HCT116 (cell line): ENCODE measurements at regions of chr20 and their contacts with region 1.

Region 1: GRCh38 chr20:40689943-40690835 is 1.2 kb upstream of the MAFB start:
- DNase-seq: peak; percentile 51
- ATAC-seq: peak; percentile 78
- H3K4me3 ChIP-seq: peak overlapping the region; percentile 50 to 60
- H3K27ac ChIP-seq: peak overlapping the region; percentile 26; the same call in 1 of the 2 replicates
- H3K4me1 ChIP-seq: peaks cover 3 to 17% of the 10 kb centered on the region in 2 experiments; a peak in 3 of 4 replicates
- H3K27me3 ChIP-seq: peaks cover 24% of the 10 kb centered on the region
- CTCF ChIP-seq: peak; percentile 64 to 88 (median 87)
- POLR2A ChIP-seq: no peak
- RAD21 ChIP-seq: peak; percentile 85

Region 2: GRCh38 chr20:39112178-39112743 is 1577.9 kb before region 1 on chr20:
- CTCF ChIA-PET with region 1: interaction called, 3 read pairs
- POLR2A ChIA-PET with region 1: no interaction called
- RAD21 ChIA-PET with region 1: no interaction called
- intact Hi-C with region 1: loop called (anchors 5 kb)
- DNase-seq: peak; percentile 50
- ATAC-seq: peak; percentile 76
- H3K4me3 ChIP-seq: no peak overlapping the region
- H3K27ac ChIP-seq: no peak overlapping the region
- H3K4me1 ChIP-seq: peaks cover 30 to 53% of the 10 kb centered on the region in 2 experiments
- H3K27me3 ChIP-seq: peaks cover 6% of the 10 kb centered on the region; the same call in 1 of the 2 replicates
- CTCF ChIP-seq: peak; percentile 57 to 81 (median 70)
- POLR2A ChIP-seq: no peak
- RAD21 ChIP-seq: peak; percentile 90

Region 3: GRCh38 chr20:39278230-39278788 is 1411.9 kb before region 1 on chr20:
- CTCF ChIA-PET with region 1: no interaction called
- POLR2A ChIA-PET with region 1: no interaction called
- RAD21 ChIA-PET with region 1: no interaction called
- intact Hi-C with region 1: loop called (anchors 5 kb)
- DNase-seq: no peak
- ATAC-seq: no peak
- H3K4me3 ChIP-seq: no peak overlapping the region
- H3K27ac ChIP-seq: no peak overlapping the region
- H3K4me1 ChIP-seq: no peaks in the 10 kb centered on the region
- H3K27me3 ChIP-seq: peaks cover 21% of the 10 kb centered on the region
- CTCF ChIP-seq: no peak
- POLR2A ChIP-seq: no peak
- RAD21 ChIP-seq: no peak

Region 4: GRCh38 chr20:40160097-40160550 is 530.1 kb before region 1 on chr20:
- CTCF ChIA-PET with region 1: interaction called, 3 read pairs
- POLR2A ChIA-PET with region 1: no interaction called
- RAD21 ChIA-PET with region 1: no interaction called
- intact Hi-C with region 1: loop called (anchors 10 kb)
- DNase-seq: peak; percentile 1
- ATAC-seq: peak; percentile 85
- H3K4me3 ChIP-seq: no peak overlapping the region
- H3K27ac ChIP-seq: no peak overlapping the region
- H3K4me1 ChIP-seq: no peaks in the 10 kb centered on the region
- H3K27me3 ChIP-seq: no peaks in the 10 kb centered on the region
- CTCF ChIP-seq: peak; percentile 11 to 74 (median 71); a peak in 5 of 6 replicates
- POLR2A ChIP-seq: no peak
- RAD21 ChIP-seq: peak; percentile 37

Region 5: GRCh38 chr20:40265825-40266533 is 424.2 kb before region 1 on chr20:
- CTCF ChIA-PET with region 1: no interaction called
- POLR2A ChIA-PET with region 1: no interaction called
- RAD21 ChIA-PET with region 1: no interaction called
- intact Hi-C with region 1: loop called (anchors 1 kb)
- DNase-seq: no peak
- ATAC-seq: peak; percentile 57; the same call in 1 of the 2 replicates
- H3K4me3 ChIP-seq: no peak overlapping the region
- H3K27ac ChIP-seq: no peak overlapping the region
- H3K4me1 ChIP-seq: no peaks in the 10 kb centered on the region
- H3K27me3 ChIP-seq: no peaks in the 10 kb centered on the region
- CTCF ChIP-seq: peak; percentile 26 to 52 (median 39); a peak in 4 of 6 replicates
- POLR2A ChIP-seq: no peak
- RAD21 ChIP-seq: peak; percentile 57

Region 6: GRCh38 chr20:40860487-40860902 is 170.3 kb after region 1 on chr20:
- CTCF ChIA-PET with region 1: no interaction called
- POLR2A ChIA-PET with region 1: no interaction called
- RAD21 ChIA-PET with region 1: no interaction called
- intact Hi-C with region 1: no loop called
- DNase-seq: peak; percentile 85
- ATAC-seq: peak; percentile 91
- H3K4me3 ChIP-seq: peak overlapping the region in 1 of 2 experiments; percentile 37; a peak in 2 of 4 replicates
- H3K27ac ChIP-seq: peak overlapping the region; percentile 27; the same call in 1 of the 2 replicates
- H3K4me1 ChIP-seq: peaks cover 21 to 38% of the 10 kb centered on the region in 2 experiments
- H3K27me3 ChIP-seq: no peaks in the 10 kb centered on the region
- CTCF ChIP-seq: no peak
- POLR2A ChIP-seq: no peak
- RAD21 ChIP-seq: no peak; the same call in 1 of the 2 replicates